GM12878 (cell line): ENCODE measurements at regions of chr14 and their contacts with region 1.

Region 1: DNA sequence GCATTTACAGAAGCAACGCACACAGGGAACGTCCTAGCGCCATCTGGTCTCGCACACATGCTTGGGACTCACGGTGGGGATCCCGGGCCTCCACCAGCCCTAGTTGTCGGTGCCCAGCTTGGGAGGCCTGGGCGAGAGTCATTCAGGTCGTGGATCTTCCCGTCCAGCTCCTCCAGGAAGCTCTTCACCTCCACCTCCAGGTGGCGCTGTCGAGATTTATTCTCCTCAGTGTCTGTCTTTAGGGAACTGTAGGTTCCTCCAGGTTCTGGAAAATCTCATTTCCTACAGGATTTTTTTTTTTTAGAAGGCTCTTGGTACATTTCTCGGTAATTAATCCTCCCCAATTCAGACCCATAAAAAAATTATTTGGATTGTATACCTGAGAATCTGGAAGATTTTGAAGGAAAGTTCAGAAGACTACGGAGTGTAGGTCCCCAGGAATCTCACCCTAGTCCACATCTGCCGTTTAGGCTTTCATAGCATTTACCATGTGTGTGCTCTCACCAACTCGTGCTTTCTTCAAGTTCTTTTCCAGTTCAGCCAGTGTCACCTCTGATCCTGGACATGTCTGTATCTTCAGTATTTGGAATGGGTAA is 910.0 kb downstream of the TMEM121 start:
- DNase-seq: no peak
- ATAC-seq: peak; percentile 68
- H3K4me3 ChIP-seq: no peak overlapping the region
- H3K27ac ChIP-seq: no peak overlapping the region
- H3K4me1 ChIP-seq: no peaks in the 10 kb centered on the region
- H3K27me3 ChIP-seq: peaks cover 0 to 6% of the 10 kb centered on the region in 2 experiments; a peak in 2 of 4 replicates
- CTCF ChIP-seq: peak; percentile 58 to 83 (median 70)
- EP300 ChIP-seq: no peak
- POLR2A ChIP-seq: no peak
- RAD21 ChIP-seq: peak; percentile 64

Region 2: DNA sequence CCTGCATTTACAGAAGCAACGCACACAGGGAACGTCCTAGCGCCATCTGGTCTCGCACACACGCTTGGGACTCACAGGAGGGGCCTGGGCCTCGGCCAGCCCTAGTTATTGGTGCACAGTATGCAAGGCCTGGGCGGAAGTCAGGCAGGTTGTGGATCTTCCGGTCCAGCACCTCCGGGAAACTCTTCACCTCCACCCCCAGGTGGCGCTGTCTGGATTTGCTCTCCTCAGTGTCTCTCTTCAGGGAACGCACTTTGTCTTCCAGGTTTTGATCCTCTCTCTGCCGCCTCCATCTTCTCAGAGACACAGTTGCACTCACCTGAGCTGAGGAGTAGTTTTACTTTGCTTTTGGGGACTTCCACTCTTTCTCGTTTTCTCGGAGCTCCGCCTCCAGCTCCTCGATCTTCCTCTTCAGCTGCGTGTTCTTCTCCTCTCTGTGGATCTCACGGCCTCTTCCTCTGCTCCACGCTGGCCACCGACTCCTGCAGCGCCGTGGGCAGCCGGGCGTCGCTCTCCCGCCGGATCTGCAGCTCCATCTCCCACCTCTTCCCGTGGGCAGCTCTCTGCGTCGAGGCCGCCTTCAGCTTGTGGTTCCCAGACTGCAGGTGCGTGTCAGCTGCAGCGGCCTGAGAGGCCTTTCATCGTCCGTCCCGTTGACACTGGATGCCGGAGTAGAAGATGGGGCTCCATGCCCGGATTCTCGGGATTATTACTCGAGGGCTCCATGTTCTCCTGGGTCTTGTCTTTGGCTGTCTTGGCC is 23.7 kb after region 1 on chr14:
- CTCF ChIA-PET with region 1: interaction called, 19 read pairs
- POLR2A ChIA-PET with region 1: no interaction called
- RAD21 ChIA-PET with region 1: interaction called, 3 read pairs
- SMC1A ChIA-PET with region 1: interaction called, 7 read pairs
- in situ Hi-C with region 1: no loop called
- intact Hi-C with region 1: no loop called
- DNase-seq: no peak
- ATAC-seq: peak; percentile 91
- H3K4me3 ChIP-seq: no peak overlapping the region
- H3K27ac ChIP-seq: no peak overlapping the region
- H3K4me1 ChIP-seq: no peaks in the 10 kb centered on the region
- H3K27me3 ChIP-seq: no peaks in the 10 kb centered on the region
- CTCF ChIP-seq: peak; percentile 41 to 56 (median 56)
- EP300 ChIP-seq: no peak
- POLR2A ChIP-seq: no peak
- RAD21 ChIP-seq: peak; percentile 45

Region 3: GRCh38 chr14:106511006-106511799 is 74.8 kb after region 1 on chr14:
- CTCF ChIA-PET with region 1: interaction called, 66 read pairs
- POLR2A ChIA-PET with region 1: no interaction called
- RAD21 ChIA-PET with region 1: no interaction called
- SMC1A ChIA-PET with region 1: interaction called, 8 read pairs
- in situ Hi-C with region 1: loop called (anchors 5 kb)
- intact Hi-C with region 1: no loop called
- DNase-seq: no peak
- ATAC-seq: peak; percentile 78
- H3K4me3 ChIP-seq: no peak overlapping the region
- H3K27ac ChIP-seq: no peak overlapping the region
- H3K4me1 ChIP-seq: no peaks in the 10 kb centered on the region
- H3K27me3 ChIP-seq: peaks cover 0 to 2% of the 10 kb centered on the region in 2 experiments; a peak in 2 of 4 replicates
- CTCF ChIP-seq: no peak
- EP300 ChIP-seq: no peak
- POLR2A ChIP-seq: no peak
- RAD21 ChIP-seq: no peak

Region 4: GRCh38 chr14:106538201-106538600 is 101.8 kb after region 1 on chr14:
- CTCF ChIA-PET with region 1: interaction called, 82 read pairs
- POLR2A ChIA-PET with region 1: no interaction called
- RAD21 ChIA-PET with region 1: interaction called, 3 read pairs
- SMC1A ChIA-PET with region 1: interaction called, 11 read pairs
- in situ Hi-C with region 1: no loop called
- intact Hi-C with region 1: loop called (anchors 5 kb)
- DNase-seq: no peak
- ATAC-seq: no peak
- H3K4me3 ChIP-seq: no peak overlapping the region
- H3K27ac ChIP-seq: no peak overlapping the region
- H3K4me1 ChIP-seq: peaks cover 7% of the 10 kb centered on the region; the same call in 1 of the 2 replicates
- H3K27me3 ChIP-seq: no peaks in the 10 kb centered on the region
- CTCF ChIP-seq: no peak
- EP300 ChIP-seq: no peak
- POLR2A ChIP-seq: no peak
- RAD21 ChIP-seq: no peak

Region 5: GRCh38 chr14:106564058-106564656 is 127.7 kb after region 1 on chr14:
- CTCF ChIA-PET with region 1: interaction called, 21 read pairs
- POLR2A ChIA-PET with region 1: no interaction called
- RAD21 ChIA-PET with region 1: interaction called, 4 read pairs
- SMC1A ChIA-PET with region 1: interaction called, 10 read pairs
- in situ Hi-C with region 1: no loop called
- intact Hi-C with region 1: no loop called
- DNase-seq: no peak
- ATAC-seq: peak; percentile 96
- H3K4me3 ChIP-seq: no peak overlapping the region
- H3K27ac ChIP-seq: no peak overlapping the region
- H3K4me1 ChIP-seq: no peaks in the 10 kb centered on the region
- H3K27me3 ChIP-seq: peaks cover 0 to 2% of the 10 kb centered on the region in 2 experiments; a peak in 2 of 4 replicates
- CTCF ChIP-seq: peak; percentile 85 to 96 (median 96)
- EP300 ChIP-seq: no peak
- POLR2A ChIP-seq: no peak
- RAD21 ChIP-seq: peak; percentile 69

Region 6: DNA sequence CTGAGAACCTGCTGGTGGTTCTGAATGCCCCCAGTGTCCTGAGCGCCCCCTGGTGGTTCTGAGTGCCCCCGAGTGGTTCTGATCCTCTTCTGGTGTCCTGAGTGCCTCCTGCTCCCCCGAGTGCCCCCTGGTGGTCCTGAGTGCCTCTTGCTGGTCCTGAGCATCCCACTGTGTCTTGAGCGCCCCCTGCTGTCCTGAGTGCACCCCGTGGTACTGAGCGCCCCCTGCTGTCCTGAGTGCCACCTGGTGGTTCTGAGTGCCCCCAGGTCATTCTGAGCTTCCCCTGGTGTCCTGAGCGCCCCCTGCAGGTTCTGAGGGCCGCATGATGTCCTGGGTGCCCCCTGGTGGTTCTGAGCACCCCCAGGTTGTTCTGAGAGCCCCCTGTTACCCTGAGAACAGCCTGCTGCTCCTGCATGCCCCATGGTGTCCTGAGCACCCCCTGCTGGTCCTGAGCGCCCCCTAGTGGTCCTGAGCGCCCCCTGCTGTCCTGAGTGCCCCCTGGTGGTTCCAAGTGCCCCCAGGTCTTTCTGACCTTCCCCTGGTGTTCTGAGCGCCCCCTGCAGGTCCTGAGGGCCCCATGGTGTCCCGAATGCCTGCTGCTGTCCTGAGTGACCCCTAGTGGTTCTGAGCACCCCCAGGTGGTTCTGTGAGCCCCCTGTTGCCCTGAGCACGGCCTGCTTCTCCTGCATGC is 255.3 kb after region 1 on chr14:
- CTCF ChIA-PET with region 1: no interaction called
- POLR2A ChIA-PET with region 1: no interaction called
- RAD21 ChIA-PET with region 1: no interaction called
- SMC1A ChIA-PET with region 1: no interaction called
- in situ Hi-C with region 1: no loop called
- intact Hi-C with region 1: no loop called
- DNase-seq: peak; percentile 79
- ATAC-seq: peak; percentile 88
- H3K4me3 ChIP-seq: no peak overlapping the region
- H3K27ac ChIP-seq: no peak overlapping the region
- H3K4me1 ChIP-seq: peaks cover 6% of the 10 kb centered on the region
- H3K27me3 ChIP-seq: peaks cover 0 to 4% of the 10 kb centered on the region in 2 experiments; a peak in 1 of 4 replicates
- CTCF ChIP-seq: peak; percentile 91 to 100 (median 100)
- EP300 ChIP-seq: no peak
- POLR2A ChIP-seq: no peak
- RAD21 ChIP-seq: peak; percentile 55; the same call in 1 of the 2 replicates